Activated naive CD4-positive, alpha-beta T cell treated with anti-CD3 and anti-CD28 coated beads for 36 hours (primary cell): ENCODE measurements at regions of chr13 and their contacts with region 1.

Region 1: DNA sequence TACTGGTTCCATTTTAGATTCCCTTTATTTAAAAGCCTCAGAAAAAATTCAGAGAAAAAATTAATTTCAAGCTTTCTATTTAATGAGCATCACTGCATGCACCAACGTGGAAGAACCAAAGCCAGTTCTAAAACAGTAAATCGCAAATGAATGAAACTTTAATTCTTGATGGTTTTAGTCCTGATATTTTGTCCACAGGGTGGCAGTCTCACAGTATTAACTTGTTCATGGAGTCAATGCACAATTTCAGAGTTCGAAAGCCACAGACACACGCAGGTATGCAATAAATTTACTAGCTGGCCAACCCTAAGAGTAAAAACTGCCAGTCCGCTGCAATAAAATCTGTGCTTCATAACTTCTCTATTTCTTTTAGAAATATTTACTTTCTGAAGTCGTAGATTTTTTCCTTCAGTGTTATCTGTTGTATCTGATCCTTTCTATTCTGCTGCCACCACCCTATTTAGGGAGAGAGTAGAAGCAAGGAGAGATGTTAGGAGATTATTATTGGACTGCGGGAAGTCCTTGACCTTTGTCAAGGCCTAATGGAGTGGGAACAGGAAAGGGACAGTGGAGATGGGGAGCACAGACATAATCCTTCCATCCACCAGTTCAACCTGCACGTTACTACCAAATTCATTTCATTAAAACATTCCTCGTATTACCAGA is 7.0 kb upstream of the WBP4 start:
- DNase-seq: peak; percentile 57
- H3K4me3 Mint-ChIP-seq: no peak overlapping the region
- H3K27ac Mint-ChIP-seq: no peak overlapping the region
- H3K4me1 Mint-ChIP-seq: peaks cover 65% of the 10 kb centered on the region
- H3K27me3 Mint-ChIP-seq: no peaks in the 10 kb centered on the region

Region 2: DNA sequence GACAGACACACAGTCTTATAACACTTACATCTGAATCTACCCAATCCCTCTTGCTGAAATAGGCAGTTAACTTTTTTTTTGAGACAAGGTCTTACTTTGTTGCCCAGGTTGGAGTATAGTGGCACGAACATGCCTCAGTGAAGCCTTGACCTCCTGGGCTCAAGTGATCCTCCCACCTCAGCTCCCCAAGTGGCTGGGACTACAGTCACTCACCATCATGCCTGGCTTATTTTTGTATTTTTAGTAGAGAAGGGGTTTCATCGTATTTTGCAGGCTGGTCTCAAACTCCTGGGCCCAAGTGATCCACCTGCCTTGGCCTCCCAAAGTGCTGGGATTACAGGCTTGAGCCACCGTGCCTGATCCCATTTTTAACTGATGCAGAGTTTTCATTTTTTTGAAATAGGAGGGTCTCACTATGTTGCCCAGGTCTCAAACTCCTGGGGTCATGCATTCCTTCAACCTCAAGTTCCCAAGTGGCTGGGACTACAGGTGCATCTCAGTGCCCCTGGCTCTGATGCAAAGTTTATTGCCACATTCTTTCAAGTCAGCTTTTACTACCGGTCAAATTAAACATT is 42.9 kb before region 1 on chr13:
- CTCF ChIA-PET with region 1: interaction called, 17 read pairs
- intact Hi-C with region 1: no loop called
- DNase-seq: no peak
- H3K4me3 Mint-ChIP-seq: no peak overlapping the region
- H3K27ac Mint-ChIP-seq: peak overlapping the region; percentile 68
- H3K4me1 Mint-ChIP-seq: peaks cover 65% of the 10 kb centered on the region
- H3K27me3 Mint-ChIP-seq: no peaks in the 10 kb centered on the region

Region 3: GRCh38 chr13:41075034-41075433 is 20.7 kb after region 1 on chr13:
- CTCF ChIA-PET with region 1: interaction called, 16 read pairs
- intact Hi-C with region 1: no loop called
- DNase-seq: peak; percentile 26
- H3K4me3 Mint-ChIP-seq: no peak overlapping the region
- H3K27ac Mint-ChIP-seq: no peak overlapping the region
- H3K4me1 Mint-ChIP-seq: no peaks in the 10 kb centered on the region
- H3K27me3 Mint-ChIP-seq: no peaks in the 10 kb centered on the region

Region 4: DNA sequence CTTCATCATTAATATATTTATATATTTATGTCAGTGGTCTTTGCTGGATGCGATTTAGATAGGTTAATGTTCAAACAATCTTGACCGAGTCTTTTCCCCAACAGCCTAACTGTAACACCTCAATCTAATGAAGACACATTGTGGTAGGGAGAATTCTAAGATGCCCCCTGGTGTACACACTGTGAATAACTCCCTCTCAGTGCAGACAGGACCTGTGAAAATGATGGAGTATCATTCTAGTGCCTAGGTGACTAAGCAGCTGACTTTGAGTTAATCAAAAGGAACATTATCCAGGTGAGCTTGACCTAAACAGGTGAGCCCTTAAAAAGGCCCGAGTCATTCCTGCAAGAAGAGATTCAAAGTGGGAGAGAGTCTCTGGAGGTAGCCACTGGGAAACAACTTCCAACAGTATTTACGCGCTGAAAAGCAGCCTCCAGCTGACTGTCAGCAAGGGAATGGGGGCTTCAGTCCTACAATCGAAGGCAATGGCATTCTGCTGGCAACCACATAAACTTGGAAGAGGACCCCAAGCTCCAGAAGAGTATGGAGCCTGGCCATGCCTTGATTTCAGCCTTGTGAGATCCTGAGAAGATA is 168.0 kb after region 1 on chr13:
- CTCF ChIA-PET with region 1: interaction called, 21 read pairs
- intact Hi-C with region 1: loop called (anchors 1 kb)
- DNase-seq: peak; percentile 78
- H3K4me3 Mint-ChIP-seq: no peak overlapping the region
- H3K27ac Mint-ChIP-seq: no peak overlapping the region
- H3K4me1 Mint-ChIP-seq: no peaks in the 10 kb centered on the region
- H3K27me3 Mint-ChIP-seq: no peaks in the 10 kb centered on the region